ENCODE measurements at regions of chr4 and their contacts with region 1.

Region 1: GRCh38 chr4:139651282-139652194 is 14.1 kb upstream of the MGST2 start:
- DNase-seq: peak; percentile 77
- H3K4me3 Mint-ChIP-seq: no peak overlapping the region
- H3K27ac Mint-ChIP-seq: no peak overlapping the region
- H3K4me1 Mint-ChIP-seq: peaks cover 4% of the 10 kb centered on the region
- H3K27me3 Mint-ChIP-seq: peaks cover 5% of the 10 kb centered on the region

Region 2: GRCh38 chr4:139416073-139416673 is 235.4 kb before region 1 on chr4:
- CTCF ChIA-PET with region 1: interaction called, 3 read pairs
- POLR2A ChIA-PET with region 1: no interaction called
- intact Hi-C with region 1: loop called (anchors 1 kb)
- DNase-seq: no peak
- H3K4me3 Mint-ChIP-seq: no peak overlapping the region
- H3K27ac Mint-ChIP-seq: no peak overlapping the region
- H3K4me1 Mint-ChIP-seq: peaks cover 8% of the 10 kb centered on the region
- H3K27me3 Mint-ChIP-seq: no peaks in the 10 kb centered on the region

Region 3: GRCh38 chr4:139603576-139604387 is 47.8 kb before region 1 on chr4:
- CTCF ChIA-PET with region 1: interaction called, 114 read pairs
- POLR2A ChIA-PET with region 1: no interaction called
- intact Hi-C with region 1: loop called (anchors 1 kb)
- DNase-seq: peak; percentile 18
- H3K4me3 Mint-ChIP-seq: no peak overlapping the region
- H3K27ac Mint-ChIP-seq: no peak overlapping the region
- H3K4me1 Mint-ChIP-seq: peaks cover 12% of the 10 kb centered on the region
- H3K27me3 Mint-ChIP-seq: peaks cover 9% of the 10 kb centered on the region

Region 4: DNA sequence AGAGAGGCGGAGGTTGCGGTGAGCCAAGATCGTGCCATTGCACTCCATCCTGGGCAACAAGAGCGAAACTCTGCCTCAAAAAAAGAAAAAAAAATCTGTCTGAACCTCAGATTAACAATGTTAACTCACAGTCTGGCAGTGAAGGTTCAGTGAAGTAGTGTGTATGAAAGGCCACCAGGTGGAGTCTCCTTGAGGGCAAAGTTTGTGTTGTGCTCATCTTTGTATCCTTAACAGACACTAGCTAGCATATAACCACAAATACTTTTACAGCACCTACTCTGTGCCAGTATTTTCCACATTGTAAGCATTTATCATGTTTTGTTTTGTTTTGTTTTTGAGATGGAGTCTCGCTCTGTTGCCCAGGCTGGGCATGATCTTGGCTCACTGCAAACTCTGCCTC is 31.9 kb before region 1 on chr4:
- CTCF ChIA-PET with region 1: interaction called, 10 read pairs
- POLR2A ChIA-PET with region 1: no interaction called
- intact Hi-C with region 1: loop called (anchors 2 kb)
- DNase-seq: no peak
- H3K4me3 Mint-ChIP-seq: no peak overlapping the region
- H3K27ac Mint-ChIP-seq: no peak overlapping the region
- H3K4me1 Mint-ChIP-seq: no peaks in the 10 kb centered on the region
- H3K27me3 Mint-ChIP-seq: peaks cover 2% of the 10 kb centered on the region

Region 5: GRCh38 chr4:139768896-139769295 is 117.4 kb after region 1 on chr4:
- CTCF ChIA-PET with region 1: no interaction called
- POLR2A ChIA-PET with region 1: no interaction called
- intact Hi-C with region 1: no loop called
- DNase-seq: no peak
- H3K4me3 Mint-ChIP-seq: no peak overlapping the region
- H3K27ac Mint-ChIP-seq: no peak overlapping the region
- H3K4me1 Mint-ChIP-seq: no peaks in the 10 kb centered on the region
- H3K27me3 Mint-ChIP-seq: no peaks in the 10 kb centered on the region

Region 6: DNA sequence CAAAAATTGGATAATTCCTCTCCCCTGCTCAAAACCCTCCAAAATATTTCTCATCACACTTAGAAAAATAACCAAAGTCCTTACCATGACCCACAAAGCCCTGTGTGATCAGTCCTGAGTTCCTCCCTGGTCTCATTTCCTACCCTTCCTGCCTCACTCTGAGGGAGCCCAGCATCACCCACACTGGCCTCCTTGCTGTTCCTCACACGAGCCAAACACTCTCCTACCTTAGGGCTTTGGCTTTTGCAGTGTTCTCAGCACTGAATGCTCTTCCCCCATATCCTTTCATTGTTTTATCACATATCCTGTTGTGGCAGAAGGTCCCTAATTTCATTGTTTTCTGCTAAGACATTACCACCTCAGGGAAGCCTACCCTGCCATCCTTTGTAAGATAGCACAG is 834.4 kb after region 1 on chr4:
- CTCF ChIA-PET with region 1: no interaction called
- POLR2A ChIA-PET with region 1: no interaction called
- intact Hi-C with region 1: no loop called
- DNase-seq: no peak
- H3K4me3 Mint-ChIP-seq: no peak overlapping the region
- H3K27ac Mint-ChIP-seq: no peak overlapping the region
- H3K4me1 Mint-ChIP-seq: no peaks in the 10 kb centered on the region
- H3K27me3 Mint-ChIP-seq: peaks cover 6% of the 10 kb centered on the region